Mammary epithelial cell (primary cell): ENCODE measurements at regions of chr2 and their contacts with region 1.

Region 1: GRCh38 chr2:137173463-137173862 is 408.1 kb downstream of the THSD7B start:
- DNase-seq: peak; percentile 81
- H3K4me3 ChIP-seq: no peak overlapping the region
- H3K27ac ChIP-seq: no peak overlapping the region
- H3K4me1 ChIP-seq: peaks cover 18% of the 10 kb centered on the region
- H3K27me3 ChIP-seq: no peaks in the 10 kb centered on the region
- CTCF ChIP-seq: peak; percentile 65 to 67

Region 2: DNA sequence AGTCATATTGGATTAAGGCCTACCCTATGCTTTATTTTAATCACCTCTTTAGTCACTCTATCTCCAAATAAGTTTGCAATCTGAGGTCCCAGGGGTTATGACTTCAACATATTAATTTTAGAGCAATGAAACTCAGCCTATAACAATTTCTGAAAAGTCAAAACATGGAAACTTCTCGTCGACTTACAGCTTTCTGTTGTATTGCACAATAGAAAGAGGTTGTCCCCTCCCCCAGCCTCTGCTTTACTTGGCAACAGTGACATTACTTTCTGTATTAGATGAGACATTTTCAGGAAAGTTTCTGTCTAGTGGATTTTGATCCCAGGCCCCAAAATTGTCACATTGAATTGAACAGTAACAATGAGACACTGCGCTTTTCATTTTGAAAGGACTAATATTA is 81.8 kb before region 1 on chr2:
- CTCF ChIA-PET with region 1: no interaction called
- dilution Hi-C with region 1: no loop called
- in situ Hi-C with region 1: no loop called
- intact Hi-C with region 1: no loop called
- DNase-seq: no peak
- H3K4me3 ChIP-seq: no peak overlapping the region
- H3K27ac ChIP-seq: no peak overlapping the region
- H3K4me1 ChIP-seq: no peaks in the 10 kb centered on the region
- H3K27me3 ChIP-seq: no peaks in the 10 kb centered on the region
- CTCF ChIP-seq: no peak

Region 3: GRCh38 chr2:137467246-137467862 is 293.9 kb after region 1 on chr2:
- CTCF ChIA-PET with region 1: no interaction called
- dilution Hi-C with region 1: no loop called
- in situ Hi-C with region 1: no loop called
- intact Hi-C with region 1: loop called (anchors 10 kb)
- DNase-seq: peak; percentile 48
- H3K4me3 ChIP-seq: no peak overlapping the region
- H3K27ac ChIP-seq: no peak overlapping the region
- H3K4me1 ChIP-seq: no peaks in the 10 kb centered on the region
- H3K27me3 ChIP-seq: peaks cover 2% of the 10 kb centered on the region
- CTCF ChIP-seq: peak; percentile 77 to 87